Stomach (tissue), 19 donors: ENCODE measurements at regions of chr15 and their contacts with region 1.

Region 1: GRCh38 chr15:79184465-79184892 is 93.9 kb upstream of the RASGRF1 start:
- DNase-seq: peak; percentile 77 to 83
- H3K4me3 ChIP-seq: no peak overlapping the region
- H3K27ac ChIP-seq: no peak overlapping the region
- H3K4me1 ChIP-seq: no peaks in the 10 kb centered on the region
- H3K27me3 ChIP-seq: peaks cover 0 to 7% (median 0%) of the 10 kb centered on the region in 3 donors
- CTCF ChIP-seq: peak in 5 of 7 experiments; percentile 86 to 97 (median 93)
- EP300 ChIP-seq: no peak
- POLR2A ChIP-seq: no peak

Region 2: GRCh38 chr15:78618490-78618934 is 566.0 kb before region 1 on chr15:
- intact Hi-C with region 1: loop called (anchors 10 kb)
- DNase-seq: peak; percentile 91 to 95
- H3K4me3 ChIP-seq: no peak overlapping the region
- H3K27ac ChIP-seq: peak overlapping the region in 1 of 5 donors; percentile 48
- H3K4me1 ChIP-seq: peaks cover 14 to 28% (median 21%) of the 10 kb centered on the region in 4 donors
- H3K27me3 ChIP-seq: peaks cover 0 to 47% (median 36%) of the 10 kb centered on the region in 3 donors
- CTCF ChIP-seq: peak in 5 of 7 experiments; percentile 44 to 94 (median 79)
- EP300 ChIP-seq: peak; percentile 61
- POLR2A ChIP-seq: no peak

Region 3: GRCh38 chr15:78909791-78910228 is 274.7 kb before region 1 on chr15:
- intact Hi-C with region 1: loop called (anchors 5 kb)
- DNase-seq: peak in 1 of 2 donors; percentile 78
- H3K4me3 ChIP-seq: no peak overlapping the region
- H3K27ac ChIP-seq: peak overlapping the region in 1 of 5 donors; percentile 1
- H3K4me1 ChIP-seq: peaks cover 10 to 94% (median 39%) of the 10 kb centered on the region in 4 donors
- H3K27me3 ChIP-seq: no peaks in the 10 kb centered on the region
- CTCF ChIP-seq: peak in 5 of 7 experiments; percentile 30 to 67 (median 62)
- EP300 ChIP-seq: no peak
- POLR2A ChIP-seq: no peak